HEK293 (cell line): ENCODE measurements at regions of chrX and their contacts with region 1.

Region 1: DNA sequence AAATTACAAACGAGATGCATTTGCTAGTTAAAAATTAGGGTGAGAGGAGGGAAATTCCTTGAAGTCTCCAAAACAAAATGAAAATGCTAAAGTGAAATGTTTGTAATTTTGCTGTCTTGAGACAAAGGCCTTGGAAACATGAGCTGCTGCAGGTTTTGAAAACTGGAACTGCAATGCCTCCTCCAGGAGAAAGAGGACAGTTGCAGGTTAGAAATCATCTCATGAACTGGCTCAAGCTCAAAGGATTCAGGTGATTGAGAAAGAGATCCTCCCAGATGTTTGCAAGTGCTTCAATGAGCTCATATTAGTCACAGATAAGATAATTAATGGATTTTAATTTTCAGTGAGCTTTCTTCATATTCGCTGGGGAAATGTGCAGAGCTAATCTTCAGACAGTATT is 32.4 kb downstream of the SMPX start:
- H3K4me3 ChIP-seq: no peak overlapping the region
- H3K27ac ChIP-seq: no peak overlapping the region
- H3K4me1 ChIP-seq: no peaks in the 10 kb centered on the region
- CTCF ChIP-seq: no peak

Region 2: DNA sequence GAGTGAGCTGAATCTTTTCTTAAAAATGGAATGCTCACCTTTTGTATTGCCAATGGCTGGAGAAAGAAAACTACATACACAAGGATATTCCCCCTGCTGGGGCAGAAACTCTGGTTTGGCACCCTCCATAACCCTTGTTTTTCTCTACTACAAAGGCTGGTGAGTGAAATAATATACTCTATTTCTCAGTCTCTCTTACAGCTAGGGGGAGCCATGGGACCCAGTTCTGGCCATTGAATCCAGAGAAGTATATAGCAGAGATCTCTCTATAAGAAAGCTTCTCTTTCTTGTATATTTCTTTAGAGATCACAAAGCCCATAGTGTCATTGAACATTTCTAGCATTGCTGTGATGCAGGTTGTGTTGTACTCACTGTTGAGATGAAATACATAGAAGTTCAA is 17.4 kb before region 1 on chrX:
- CTCF ChIA-PET with region 1: interaction called, 17 read pairs
- POLR2A ChIA-PET with region 1: no interaction called
- H3K4me3 ChIP-seq: no peak overlapping the region
- H3K27ac ChIP-seq: no peak overlapping the region
- H3K4me1 ChIP-seq: no peaks in the 10 kb centered on the region
- CTCF ChIP-seq: no peak